ENCODE measurements at regions of chr11 and their contacts with region 1.

Region 1: GRCh38 chr11:9861860-9862725 is 198.2 kb downstream of the SWAP70 start:
- DNase-seq: peak; percentile 59 to 79 (median 70)
- ATAC-seq: peak; percentile 100
- H3K4me3 ChIP-seq: no peak overlapping the region
- H3K27ac ChIP-seq: no peak overlapping the region
- H3K4me1 ChIP-seq: no peaks in the 10 kb centered on the region; a peak in 1 of 5 replicates
- H3K27me3 ChIP-seq: no peaks in the 10 kb centered on the region
- CTCF ChIP-seq: peak; percentile 84 to 91 (median 85)
- EP300 ChIP-seq: no peak
- POLR2A ChIP-seq: no peak
- RAD21 ChIP-seq: peak; percentile 81 to 92

Region 2: DNA sequence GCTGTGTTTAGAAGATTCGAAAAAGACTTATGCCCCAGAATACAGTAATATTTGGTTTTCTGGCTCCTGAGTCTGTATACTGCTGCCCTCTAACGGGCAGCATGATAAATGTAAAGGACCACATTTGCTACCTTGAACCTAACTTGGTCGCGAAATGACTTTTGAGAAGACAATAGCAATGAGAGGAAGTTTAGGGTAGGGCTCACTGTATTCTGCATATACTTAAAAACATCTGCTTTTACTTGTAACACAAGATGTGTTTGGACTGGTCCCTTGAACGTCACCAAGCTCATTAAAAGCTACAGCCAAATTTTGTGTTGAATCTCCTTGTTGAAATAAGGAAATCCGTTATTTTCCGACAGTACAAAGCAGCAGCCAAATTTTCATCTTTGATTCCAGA is 110.9 kb after region 1 on chr11:
- CTCF ChIA-PET with region 1: interaction called, 16 read pairs
- POLR2A ChIA-PET with region 1: no interaction called
- in situ Hi-C with region 1: loop called (anchors 10 kb)
- intact Hi-C with region 1: loop called (anchors 1 kb)
- DNase-seq: peak; percentile 39 to 61 (median 48)
- ATAC-seq: peak; percentile 82
- H3K4me3 ChIP-seq: no peak overlapping the region
- H3K27ac ChIP-seq: no peak overlapping the region
- H3K4me1 ChIP-seq: no peaks in the 10 kb centered on the region
- H3K27me3 ChIP-seq: no peaks in the 10 kb centered on the region
- CTCF ChIP-seq: peak; percentile 66 to 91 (median 71)
- EP300 ChIP-seq: no peak
- POLR2A ChIP-seq: no peak
- RAD21 ChIP-seq: peak; percentile 81 to 93

Region 3: DNA sequence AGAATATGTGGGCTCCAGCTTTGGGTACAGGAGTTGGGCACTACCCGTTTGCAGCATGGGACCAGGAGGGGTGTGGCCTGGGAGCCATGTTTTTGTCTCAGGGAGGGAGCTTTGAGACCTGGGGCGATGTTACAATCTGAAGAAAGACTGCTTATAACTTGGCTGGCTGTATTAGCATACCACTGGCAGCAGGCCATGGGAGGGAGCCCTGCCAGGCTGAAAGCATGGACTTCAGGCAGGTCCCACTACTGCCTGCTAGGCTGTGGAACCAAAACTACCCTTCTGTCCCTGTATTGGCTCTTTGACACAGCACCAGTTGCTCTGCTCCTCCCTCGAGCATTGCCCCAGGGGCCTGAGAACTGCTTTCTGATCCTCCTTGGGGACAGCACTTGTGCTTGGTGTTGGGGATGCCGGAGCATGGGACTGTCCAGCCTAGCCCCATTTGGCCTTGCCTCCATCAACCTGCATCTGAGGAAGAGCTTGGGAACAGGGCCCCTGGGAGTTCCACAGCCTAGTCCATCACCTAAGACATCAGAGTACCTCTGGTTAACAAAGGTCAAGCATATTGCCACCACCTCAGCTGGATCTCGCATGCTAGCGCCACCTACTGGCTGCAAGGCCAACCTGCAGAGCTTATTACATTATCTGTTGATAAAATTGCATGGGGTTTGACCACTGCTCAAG is 214.5 kb after region 1 on chr11:
- CTCF ChIA-PET with region 1: no interaction called
- POLR2A ChIA-PET with region 1: no interaction called
- in situ Hi-C with region 1: no loop called
- intact Hi-C with region 1: loop called (anchors 2 kb)
- DNase-seq: peak; percentile 62 to 69 (median 63)
- ATAC-seq: peak; percentile 94
- H3K4me3 ChIP-seq: no peak overlapping the region
- H3K27ac ChIP-seq: no peak overlapping the region
- H3K4me1 ChIP-seq: no peaks in the 10 kb centered on the region
- H3K27me3 ChIP-seq: no peaks in the 10 kb centered on the region
- CTCF ChIP-seq: peak; percentile 80 to 86 (median 86)
- EP300 ChIP-seq: no peak
- POLR2A ChIP-seq: no peak
- RAD21 ChIP-seq: peak; percentile 17 to 74; a peak in 2 of 4 replicates

Region 4: GRCh38 chr11:10307442-10308207 is 445.5 kb after region 1 on chr11:
- CTCF ChIA-PET with region 1: no interaction called
- POLR2A ChIA-PET with region 1: no interaction called
- in situ Hi-C with region 1: loop called (anchors 25 kb)
- intact Hi-C with region 1: loop called (anchors 5 kb)
- DNase-seq: peak; percentile 81 to 87 (median 84)
- ATAC-seq: peak; percentile 94
- H3K4me3 ChIP-seq: peak overlapping the region; percentile 32
- H3K27ac ChIP-seq: no peak overlapping the region; the same call in 2 of the 3 replicates
- H3K4me1 ChIP-seq: peaks cover 24 to 50% of the 10 kb centered on the region in 2 experiments
- H3K27me3 ChIP-seq: peaks cover 15 to 19% of the 10 kb centered on the region in 2 experiments
- CTCF ChIP-seq: peak; percentile 87 to 97 (median 88)
- EP300 ChIP-seq: no peak
- POLR2A ChIP-seq: no peak
- RAD21 ChIP-seq: peak; percentile 85 to 89

Region 5: DNA sequence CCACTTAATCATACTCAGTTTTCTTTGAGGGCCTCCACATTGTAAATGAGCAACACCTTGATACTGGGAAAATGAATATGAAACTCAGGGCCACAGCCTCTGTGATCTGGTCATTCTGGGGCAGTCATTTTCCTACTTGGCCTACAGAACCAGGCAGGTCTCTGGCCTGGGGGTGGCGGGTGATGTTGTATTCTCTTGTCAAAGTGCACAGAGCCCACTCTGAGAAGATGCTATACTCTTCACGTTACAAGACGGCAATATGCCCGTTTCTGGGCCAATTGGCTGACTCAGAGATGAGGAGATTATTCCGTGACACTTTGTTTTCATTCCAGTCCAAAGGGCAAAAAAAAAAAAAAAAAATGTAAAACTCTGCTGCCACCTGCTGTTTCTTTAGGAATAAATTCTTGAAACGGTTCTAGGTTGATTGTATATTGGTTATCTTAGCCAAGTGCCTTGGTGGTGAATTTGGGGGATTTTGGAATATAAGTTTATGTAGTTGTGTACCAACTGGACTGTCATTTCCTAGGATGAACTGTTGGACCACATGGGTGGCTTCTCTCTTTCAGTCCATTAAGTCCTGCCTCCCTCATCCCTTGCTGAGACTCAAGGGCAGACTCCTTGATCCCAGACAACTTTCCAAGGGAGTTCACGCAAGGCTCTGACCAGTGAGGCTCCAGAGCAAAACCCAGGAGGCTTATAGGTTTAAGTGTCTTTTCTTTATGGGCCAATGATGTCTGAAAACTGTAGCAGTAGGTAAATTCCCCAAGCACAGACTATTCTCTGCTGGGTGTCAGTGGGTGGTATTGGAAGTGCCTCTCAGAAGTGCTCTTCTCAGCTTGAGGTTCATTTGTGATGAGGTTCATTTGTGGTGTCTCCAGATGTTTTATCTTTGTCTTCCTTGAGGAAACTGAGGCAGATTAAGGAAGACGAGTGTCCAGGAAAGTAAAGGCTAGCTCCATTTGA is 461.0 kb after region 1 on chr11:
- CTCF ChIA-PET with region 1: interaction called, 9 read pairs
- POLR2A ChIA-PET with region 1: no interaction called
- in situ Hi-C with region 1: loop called (anchors 25 kb)
- intact Hi-C with region 1: loop called (anchors 2 kb)
- DNase-seq: peak; percentile 36 to 77 (median 51)
- ATAC-seq: peak; percentile 91
- H3K4me3 ChIP-seq: no peak overlapping the region
- H3K27ac ChIP-seq: no peak overlapping the region
- H3K4me1 ChIP-seq: peaks cover 0 to 5% of the 10 kb centered on the region in 2 experiments; a peak in 2 of 5 replicates
- H3K27me3 ChIP-seq: no peaks in the 10 kb centered on the region
- CTCF ChIP-seq: peak; percentile 46 to 82 (median 57); a peak in 4 of 6 replicates
- EP300 ChIP-seq: no peak; the same call in 1 of the 2 replicates
- POLR2A ChIP-seq: no peak
- RAD21 ChIP-seq: peak; percentile 71 to 72

Region 6: GRCh38 chr11:10366568-10367370 is 504.7 kb after region 1 on chr11:
- CTCF ChIA-PET with region 1: no interaction called
- POLR2A ChIA-PET with region 1: no interaction called
- in situ Hi-C with region 1: no loop called
- intact Hi-C with region 1: loop called (anchors 5 kb)
- DNase-seq: peak; percentile 68 to 87 (median 75)
- ATAC-seq: peak; percentile 99
- H3K4me3 ChIP-seq: no peak overlapping the region
- H3K27ac ChIP-seq: no peak overlapping the region
- H3K4me1 ChIP-seq: peaks cover 3 to 4% of the 10 kb centered on the region in 2 experiments; a peak in 3 of 5 replicates
- H3K27me3 ChIP-seq: peaks cover 0 to 4% of the 10 kb centered on the region in 2 experiments; a peak in 1 of 5 replicates
- CTCF ChIP-seq: peak; percentile 91 to 93 (median 91)
- EP300 ChIP-seq: 0 out of 2 replicates have a peak, but pooled peaks have one; percentile 14
- POLR2A ChIP-seq: no peak
- RAD21 ChIP-seq: peak; percentile 68 to 85